Heart right ventricle (tissue), 16 donors: ENCODE measurements at regions of chr4 and their contacts with region 1.

Region 1: DNA sequence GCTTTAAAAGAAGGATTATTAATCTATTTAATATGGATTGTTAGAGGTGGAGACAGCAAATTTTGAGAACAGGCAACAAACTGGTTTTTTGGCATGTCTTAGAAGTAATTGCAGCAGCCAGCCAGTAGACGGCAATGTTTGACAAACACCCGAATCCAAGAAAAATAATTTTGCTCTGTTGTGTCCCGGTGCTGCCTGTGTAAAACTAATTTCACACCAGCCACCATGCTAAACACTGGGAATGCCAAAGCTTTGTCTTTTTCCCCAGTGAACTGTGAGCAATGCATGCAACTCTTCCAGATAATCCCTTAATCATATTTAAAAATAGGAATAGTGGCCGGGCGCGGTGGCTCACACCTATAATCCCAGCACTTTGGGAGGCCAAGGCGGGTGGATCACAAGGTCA is 25.9 kb downstream of the SMIM31 start:
- DNase-seq: no peak
- ATAC-seq: no peak
- H3K4me3 ChIP-seq: no peak overlapping the region
- H3K27ac ChIP-seq: no peak overlapping the region
- H3K4me1 ChIP-seq: no peaks in the 10 kb centered on the region
- H3K27me3 ChIP-seq: no peaks in the 10 kb centered on the region
- CTCF ChIP-seq: peak; percentile 14 to 76 (median 57)

Region 2: GRCh38 chr4:164501074-164501473 is 278.7 kb before region 1 on chr4:
- intact Hi-C with region 1: no loop called
- DNase-seq: no peak
- ATAC-seq: no peak
- H3K4me3 ChIP-seq: no peak overlapping the region
- H3K27ac ChIP-seq: no peak overlapping the region
- H3K4me1 ChIP-seq: no peaks in the 10 kb centered on the region
- H3K27me3 ChIP-seq: no peaks in the 10 kb centered on the region
- CTCF ChIP-seq: no peak

Region 3: DNA sequence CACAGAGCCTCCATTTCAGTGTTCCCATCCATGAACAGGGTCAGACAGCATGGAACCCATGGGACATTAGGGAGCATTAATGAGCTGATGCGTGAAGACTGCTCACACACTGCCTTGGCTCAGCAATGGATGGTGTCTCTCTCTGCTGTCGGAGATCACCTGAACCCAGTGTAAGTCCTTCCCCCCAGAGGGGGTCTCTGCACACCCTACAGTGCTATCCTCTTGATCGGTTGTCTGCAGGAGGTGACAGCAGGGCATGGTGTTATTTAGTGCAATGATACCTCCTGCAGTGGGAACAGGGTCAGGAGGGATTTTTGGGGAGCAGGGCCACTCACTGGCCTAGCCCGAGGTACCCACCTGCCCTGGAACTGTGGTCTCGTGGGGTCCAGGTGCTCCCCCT is 122.8 kb after region 1 on chr4:
- intact Hi-C with region 1: no loop called
- DNase-seq: no peak
- ATAC-seq: no peak
- H3K4me3 ChIP-seq: no peak overlapping the region
- H3K27ac ChIP-seq: no peak overlapping the region
- H3K4me1 ChIP-seq: no peaks in the 10 kb centered on the region
- H3K27me3 ChIP-seq: no peaks in the 10 kb centered on the region
- CTCF ChIP-seq: no peak

Region 4: DNA sequence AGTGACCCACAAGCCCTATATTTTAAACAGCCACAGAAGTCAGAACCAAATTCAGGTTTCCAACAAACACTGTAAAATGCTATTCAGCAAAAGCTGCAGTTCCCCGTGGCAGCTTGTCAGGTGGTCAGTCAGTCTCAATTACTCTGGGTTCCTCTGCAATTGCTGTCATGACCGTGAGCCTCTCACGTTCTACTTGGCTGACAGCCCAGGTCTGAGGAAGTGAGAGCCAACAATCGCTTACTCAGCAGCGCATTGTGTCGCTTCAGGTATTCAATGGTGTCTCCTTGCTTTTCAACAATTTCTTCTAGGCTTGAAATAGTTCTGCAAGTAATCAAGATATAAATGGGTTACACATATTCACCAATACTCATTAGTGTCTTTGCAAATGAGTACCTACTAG is 299.7 kb after region 1 on chr4:
- intact Hi-C with region 1: no loop called
- DNase-seq: peak; percentile 25 to 34
- ATAC-seq: peak in 4 of 8 donors; percentile 49 to 80 (median 64)
- H3K4me3 ChIP-seq: no peak overlapping the region
- H3K27ac ChIP-seq: no peak overlapping the region
- H3K4me1 ChIP-seq: peaks cover 0 to 3% (median 0%) of the 10 kb centered on the region in 9 donors
- H3K27me3 ChIP-seq: no peaks in the 10 kb centered on the region
- CTCF ChIP-seq: no peak

Region 5: DNA sequence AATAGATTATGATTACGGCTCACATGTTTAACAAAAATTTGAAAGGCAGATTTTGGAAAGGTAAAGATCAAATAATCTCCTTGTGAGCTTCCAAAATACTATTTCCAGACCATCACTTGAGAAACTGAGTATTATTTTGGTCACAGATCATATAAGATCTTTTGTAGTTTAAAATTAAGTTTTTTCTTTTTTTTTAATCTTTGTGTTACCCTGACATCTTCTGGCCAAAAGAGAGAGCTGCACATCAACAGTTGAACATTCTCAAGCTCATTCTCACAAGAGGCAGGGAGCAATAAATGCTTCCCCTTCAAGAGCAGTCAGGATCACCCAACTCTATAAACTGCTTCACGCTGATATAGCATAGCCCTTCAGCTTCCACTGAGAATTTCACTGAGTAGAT is 317.0 kb after region 1 on chr4:
- intact Hi-C with region 1: loop called in 7 of 10 experiments (anchors 5 to 10 kb)
- DNase-seq: no peak
- ATAC-seq: no peak
- H3K4me3 ChIP-seq: no peak overlapping the region
- H3K27ac ChIP-seq: no peak overlapping the region
- H3K4me1 ChIP-seq: no peaks in the 10 kb centered on the region
- H3K27me3 ChIP-seq: no peaks in the 10 kb centered on the region
- CTCF ChIP-seq: peak; percentile 26 to 59 (median 52)

Region 6: GRCh38 chr4:166003811-166004210 is 1224.0 kb after region 1 on chr4:
- intact Hi-C with region 1: no loop called
- DNase-seq: no peak
- ATAC-seq: no peak
- H3K4me3 ChIP-seq: no peak overlapping the region
- H3K27ac ChIP-seq: no peak overlapping the region
- H3K4me1 ChIP-seq: no peaks in the 10 kb centered on the region
- H3K27me3 ChIP-seq: no peaks in the 10 kb centered on the region
- CTCF ChIP-seq: no peak